Activated CD4-positive, alpha-beta T cell treated with anti-CD3 and anti-CD28 coated beads for 36 hours (primary cell): ENCODE measurements at regions of chr5 and their contacts with region 1.

Region 1: GRCh38 chr5:100872408-100873190 is 30.5 kb downstream of the ST8SIA4 start:
- DNase-seq: peak; percentile 44
- ATAC-seq: peak; percentile 97
- H3K4me3 Mint-ChIP-seq: no peak overlapping the region
- H3K27ac Mint-ChIP-seq: peak overlapping the region; percentile 82
- H3K4me1 Mint-ChIP-seq: peaks cover 60% of the 10 kb centered on the region
- H3K27me3 Mint-ChIP-seq: no peaks in the 10 kb centered on the region

Region 2: GRCh38 chr5:100890461-100891008 is 17.9 kb after region 1 on chr5:
- CTCF ChIA-PET with region 1: interaction called, 4 read pairs
- POLR2A ChIA-PET with region 1: interaction called, 3 read pairs
- intact Hi-C with region 1: loop called (anchors 1 to 2 kb)
- DNase-seq: no peak
- ATAC-seq: peak; percentile 66
- H3K4me3 Mint-ChIP-seq: peak overlapping the region; percentile 55
- H3K27ac Mint-ChIP-seq: peak overlapping the region; percentile 88
- H3K4me1 Mint-ChIP-seq: peaks cover 66% of the 10 kb centered on the region
- H3K27me3 Mint-ChIP-seq: no peaks in the 10 kb centered on the region